Activated CD4-positive, alpha-beta T cell treated with anti-CD3 and anti-CD28 coated beads for 36 hours (primary cell): ENCODE measurements at regions of chr10 and their contacts with region 1.

Region 1: DNA sequence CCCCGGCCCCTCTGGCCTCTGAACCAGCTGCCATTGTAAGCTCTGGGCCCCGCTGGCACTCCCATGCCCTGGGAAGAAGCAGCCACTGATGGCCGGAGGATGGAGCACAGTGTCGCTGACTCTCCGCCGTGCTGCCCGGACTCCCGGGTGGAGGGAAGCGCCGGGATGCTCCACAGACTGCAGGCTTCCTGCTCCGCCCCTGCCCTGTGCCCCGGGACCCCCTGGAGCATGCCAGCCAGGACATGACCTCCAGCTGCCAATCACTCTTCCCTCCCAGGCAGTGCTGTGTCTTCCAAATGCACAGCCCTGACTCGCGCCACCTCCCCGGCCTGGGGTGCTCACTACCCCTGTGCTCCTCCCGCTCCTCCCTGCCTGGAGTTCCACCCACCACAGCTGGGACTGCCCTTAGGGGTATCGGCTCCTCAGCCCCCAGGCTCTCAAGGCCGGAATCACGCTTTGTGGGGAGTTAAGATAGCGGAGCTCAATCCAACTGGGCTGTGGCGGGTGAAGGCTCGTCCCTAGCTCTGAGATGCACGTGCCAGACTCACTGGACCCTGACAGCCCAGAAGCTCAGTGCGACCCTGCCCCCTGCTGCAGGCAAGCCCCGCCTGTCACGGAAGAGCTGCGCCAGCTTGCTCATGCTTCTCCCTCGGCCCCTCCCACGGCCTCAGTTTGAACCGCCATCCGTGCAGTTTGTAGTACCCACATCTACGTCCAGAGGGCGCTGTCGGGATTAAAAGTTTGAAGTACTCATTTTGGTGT is 142.3 kb upstream of the TCERG1L start:
- DNase-seq: peak; percentile 88
- ATAC-seq: peak; percentile 72
- H3K4me3 Mint-ChIP-seq: peak overlapping the region; percentile 21
- H3K27ac Mint-ChIP-seq: no peak overlapping the region
- H3K4me1 Mint-ChIP-seq: peaks cover 3% of the 10 kb centered on the region
- H3K27me3 Mint-ChIP-seq: peaks cover 16% of the 10 kb centered on the region

Region 2: GRCh38 chr10:131786756-131787605 is 333.2 kb after region 1 on chr10:
- CTCF ChIA-PET with region 1: no interaction called
- POLR2A ChIA-PET with region 1: no interaction called
- intact Hi-C with region 1: loop called (anchors 1 to 2 kb)
- DNase-seq: peak; percentile 66
- ATAC-seq: no peak
- H3K4me3 Mint-ChIP-seq: no peak overlapping the region
- H3K27ac Mint-ChIP-seq: no peak overlapping the region
- H3K4me1 Mint-ChIP-seq: no peaks in the 10 kb centered on the region
- H3K27me3 Mint-ChIP-seq: peaks cover 8% of the 10 kb centered on the region